CD4-positive, alpha-beta T cell (primary cell): ENCODE measurements at regions of chr15 and their contacts with region 1.

Region 1: GRCh38 chr15:89087830-89088604 is at the start of gene ABHD2:
- DNase-seq: peak; percentile 95 to 99 (median 97)
- ATAC-seq: peak; percentile 95
- H3K4me3 ChIP-seq: peak within 1 kb of the TSS; percentile 97
- H3K4me3 Mint-ChIP-seq: no peak within 1 kb of the TSS
- H3K27ac ChIP-seq: peak within 1 kb of the TSS; percentile 49 to 55
- H3K27ac Mint-ChIP-seq: peak within 1 kb of the TSS; percentile 90
- H3K4me1 ChIP-seq: peaks cover 37% of the 10 kb centered on the region
- H3K4me1 Mint-ChIP-seq: peaks cover 30% of the 10 kb centered on the region
- H3K27me3 ChIP-seq: no peaks in the 10 kb centered on the region
- H3K27me3 Mint-ChIP-seq: no peaks in the 10 kb centered on the region
- CTCF ChIP-seq: no peak
- total RNA-seq, gene ABHD2: 36.0 to 39.2 TPM

Region 2: DNA sequence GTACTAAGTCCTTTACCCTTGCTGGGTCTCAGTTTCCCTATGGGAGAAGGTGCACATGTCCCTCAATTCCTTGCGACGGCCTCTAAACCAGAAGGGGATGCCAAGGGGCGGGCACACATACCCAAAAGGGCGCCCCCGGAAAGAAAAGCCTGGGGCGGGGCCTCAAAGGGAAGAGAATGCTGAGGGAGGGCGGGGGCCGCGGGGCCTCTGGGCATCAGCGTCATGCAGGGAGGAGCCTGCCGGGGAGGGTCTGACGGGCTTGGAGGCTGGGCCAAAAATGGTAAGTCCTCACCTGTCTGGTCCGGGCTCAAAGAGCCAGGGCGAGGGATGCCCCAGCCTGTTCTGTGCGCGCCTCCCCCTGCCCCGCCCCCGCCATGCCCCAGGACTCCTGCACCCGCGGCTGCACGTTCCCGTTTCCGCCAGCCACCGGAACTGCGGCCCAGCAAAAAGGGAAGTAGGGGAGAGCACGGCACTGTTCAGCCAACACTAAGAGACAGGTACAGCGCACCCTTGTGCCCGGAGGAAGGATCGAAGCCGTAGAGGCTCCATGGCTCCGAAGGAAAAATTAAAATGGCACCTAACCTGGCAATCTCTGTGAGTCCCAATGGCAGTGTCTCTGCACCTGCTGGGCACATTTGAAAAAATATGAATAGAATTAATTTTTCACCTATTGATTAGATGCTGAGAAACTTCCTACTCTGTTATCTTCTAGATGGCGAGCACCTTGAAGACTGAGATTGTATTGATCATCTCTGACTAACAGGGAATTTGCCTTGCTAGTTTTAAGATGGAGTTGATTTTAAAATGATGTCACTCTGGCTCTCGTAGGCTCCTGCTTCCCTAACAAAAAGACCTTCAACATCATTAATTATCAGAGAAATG is 541.5 kb before region 1 on chr15 and contains the start of gene DET1:
- CTCF ChIA-PET with region 1: no interaction called
- POLR2A ChIA-PET with region 1: no interaction called
- intact Hi-C with region 1: loop called in 1 of 2 experiments (anchors 10 kb)
- DNase-seq: peak; percentile 90 to 98 (median 94)
- ATAC-seq: peak; percentile 91
- H3K4me3 ChIP-seq: peak within 1 kb of the TSS; percentile 66
- H3K4me3 Mint-ChIP-seq: peak within 1 kb of the TSS; percentile 91
- H3K27ac ChIP-seq: peak within 1 kb of the TSS; percentile 64 to 74
- H3K27ac Mint-ChIP-seq: peak within 1 kb of the TSS; percentile 95
- H3K4me1 ChIP-seq: peaks cover 10% of the 10 kb centered on the region
- H3K4me1 Mint-ChIP-seq: peaks cover 19% of the 10 kb centered on the region
- H3K27me3 ChIP-seq: no peaks in the 10 kb centered on the region
- H3K27me3 Mint-ChIP-seq: no peaks in the 10 kb centered on the region
- CTCF ChIP-seq: peak; percentile 74
- total RNA-seq, gene DET1: 2.2 to 2.8 TPM

Region 3: DNA sequence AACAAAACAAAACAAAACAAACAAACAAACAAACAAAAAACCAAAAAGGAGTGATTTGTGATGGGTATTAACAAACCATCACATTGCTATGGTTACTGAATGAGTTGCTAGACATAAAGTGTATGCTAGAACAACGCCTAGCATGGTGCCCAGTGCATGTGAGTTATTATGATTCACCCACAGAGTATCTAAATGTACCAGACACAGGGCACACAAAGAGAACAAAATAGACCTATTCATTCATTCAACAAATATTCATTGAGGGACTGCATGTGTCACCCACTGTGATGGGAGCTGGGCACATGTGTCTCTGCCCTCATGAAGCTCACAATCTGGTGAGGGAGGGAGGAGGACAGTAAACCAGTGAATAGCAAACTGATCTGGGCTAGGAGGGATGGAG is 296.4 kb before region 1 on chr15:
- CTCF ChIA-PET with region 1: no interaction called
- POLR2A ChIA-PET with region 1: no interaction called
- intact Hi-C with region 1: no loop called
- DNase-seq: no peak
- ATAC-seq: no peak
- H3K4me3 ChIP-seq: no peak overlapping the region
- H3K4me3 Mint-ChIP-seq: no peak overlapping the region
- H3K27ac ChIP-seq: no peak overlapping the region
- H3K27ac Mint-ChIP-seq: no peak overlapping the region
- H3K4me1 ChIP-seq: no peaks in the 10 kb centered on the region
- H3K4me1 Mint-ChIP-seq: no peaks in the 10 kb centered on the region
- H3K27me3 ChIP-seq: peaks cover 13 to 42% of the 10 kb centered on the region in 2 experiments
- H3K27me3 Mint-ChIP-seq: peaks cover 53% of the 10 kb centered on the region
- CTCF ChIP-seq: no peak

Region 4: DNA sequence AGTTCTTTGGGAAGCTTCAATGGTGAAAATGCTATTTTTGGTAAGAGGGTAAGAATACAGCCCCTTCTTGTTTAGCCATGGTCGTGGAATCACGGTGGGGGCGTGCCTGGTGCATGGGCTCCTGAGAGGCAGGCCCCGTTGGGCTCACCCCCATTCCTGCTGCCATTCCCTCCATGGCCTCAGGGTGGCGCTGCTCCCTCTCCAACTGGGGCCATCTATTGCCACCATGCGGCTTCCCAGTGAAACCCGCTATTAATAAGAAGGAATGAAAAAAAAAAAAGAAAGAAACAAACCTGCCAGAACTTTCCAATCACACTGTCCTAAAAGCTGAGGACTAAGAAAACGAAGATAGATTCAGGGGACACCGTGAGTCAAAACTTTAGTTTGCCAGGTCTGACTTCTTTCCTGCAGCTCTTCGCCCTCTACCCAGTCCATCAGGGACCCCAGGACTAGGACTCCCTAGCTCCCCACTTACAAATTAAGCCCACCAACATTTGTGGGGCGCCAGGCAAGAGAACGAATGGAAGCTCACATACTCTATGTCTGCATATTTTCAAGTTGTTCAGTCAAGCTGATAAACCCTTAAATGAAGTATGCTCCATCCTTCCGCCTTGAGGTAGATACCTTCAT is 30.4 kb before region 1 on chr15:
- CTCF ChIA-PET with region 1: interaction called, 11 read pairs
- POLR2A ChIA-PET with region 1: interaction called, 8 read pairs
- intact Hi-C with region 1: loop called in 1 of 2 experiments (anchors 2 kb)
- DNase-seq: peak; percentile 65 to 89 (median 80)
- ATAC-seq: peak; percentile 97
- H3K4me3 ChIP-seq: no peak overlapping the region
- H3K4me3 Mint-ChIP-seq: no peak overlapping the region
- H3K27ac ChIP-seq: no peak overlapping the region
- H3K27ac Mint-ChIP-seq: no peak overlapping the region
- H3K4me1 ChIP-seq: peaks cover 8% of the 10 kb centered on the region
- H3K4me1 Mint-ChIP-seq: peaks cover 4% of the 10 kb centered on the region
- H3K27me3 ChIP-seq: no peaks in the 10 kb centered on the region
- H3K27me3 Mint-ChIP-seq: no peaks in the 10 kb centered on the region
- CTCF ChIP-seq: peak; percentile 95

Region 5: GRCh38 chr15:89129123-89129815 is 41.3 kb after region 1 on chr15:
- CTCF ChIA-PET with region 1: interaction called, 10 read pairs
- POLR2A ChIA-PET with region 1: interaction called, 12 read pairs
- intact Hi-C with region 1: loop called (anchors 2 to 5 kb)
- DNase-seq: peak; percentile 36 to 78 (median 55)
- ATAC-seq: peak; percentile 66
- H3K4me3 ChIP-seq: no peak overlapping the region
- H3K4me3 Mint-ChIP-seq: no peak overlapping the region
- H3K27ac ChIP-seq: no peak overlapping the region
- H3K27ac Mint-ChIP-seq: no peak overlapping the region
- H3K4me1 ChIP-seq: peaks cover 14% of the 10 kb centered on the region
- H3K4me1 Mint-ChIP-seq: peaks cover 16% of the 10 kb centered on the region
- H3K27me3 ChIP-seq: no peaks in the 10 kb centered on the region
- H3K27me3 Mint-ChIP-seq: no peaks in the 10 kb centered on the region
- CTCF ChIP-seq: peak; percentile 82

Region 6: GRCh38 chr15:89334510-89335288 is 246.7 kb after region 1 on chr15 and contains the start of gene POLG:
- CTCF ChIA-PET with region 1: no interaction called
- POLR2A ChIA-PET with region 1: interaction called, 4 read pairs
- intact Hi-C with region 1: loop called in 1 of 2 experiments (anchors 2 kb)
- DNase-seq: peak; percentile 98 to 100 (median 99)
- ATAC-seq: peak; percentile 91
- H3K4me3 ChIP-seq: peak within 1 kb of the TSS; percentile 92
- H3K4me3 Mint-ChIP-seq: peak within 1 kb of the TSS; percentile 96
- H3K27ac ChIP-seq: peak within 1 kb of the TSS; percentile 55 to 79
- H3K27ac Mint-ChIP-seq: peak within 1 kb of the TSS; percentile 100
- H3K4me1 ChIP-seq: peaks cover 54% of the 10 kb centered on the region
- H3K4me1 Mint-ChIP-seq: peaks cover 56% of the 10 kb centered on the region
- H3K27me3 ChIP-seq: no peaks in the 10 kb centered on the region
- H3K27me3 Mint-ChIP-seq: peaks cover 11% of the 10 kb centered on the region
- CTCF ChIP-seq: no peak
- total RNA-seq, gene POLG: 139 to 140 TPM